ENCODE measurements at regions of chr1 and their contacts with region 1.

Region 1: DNA sequence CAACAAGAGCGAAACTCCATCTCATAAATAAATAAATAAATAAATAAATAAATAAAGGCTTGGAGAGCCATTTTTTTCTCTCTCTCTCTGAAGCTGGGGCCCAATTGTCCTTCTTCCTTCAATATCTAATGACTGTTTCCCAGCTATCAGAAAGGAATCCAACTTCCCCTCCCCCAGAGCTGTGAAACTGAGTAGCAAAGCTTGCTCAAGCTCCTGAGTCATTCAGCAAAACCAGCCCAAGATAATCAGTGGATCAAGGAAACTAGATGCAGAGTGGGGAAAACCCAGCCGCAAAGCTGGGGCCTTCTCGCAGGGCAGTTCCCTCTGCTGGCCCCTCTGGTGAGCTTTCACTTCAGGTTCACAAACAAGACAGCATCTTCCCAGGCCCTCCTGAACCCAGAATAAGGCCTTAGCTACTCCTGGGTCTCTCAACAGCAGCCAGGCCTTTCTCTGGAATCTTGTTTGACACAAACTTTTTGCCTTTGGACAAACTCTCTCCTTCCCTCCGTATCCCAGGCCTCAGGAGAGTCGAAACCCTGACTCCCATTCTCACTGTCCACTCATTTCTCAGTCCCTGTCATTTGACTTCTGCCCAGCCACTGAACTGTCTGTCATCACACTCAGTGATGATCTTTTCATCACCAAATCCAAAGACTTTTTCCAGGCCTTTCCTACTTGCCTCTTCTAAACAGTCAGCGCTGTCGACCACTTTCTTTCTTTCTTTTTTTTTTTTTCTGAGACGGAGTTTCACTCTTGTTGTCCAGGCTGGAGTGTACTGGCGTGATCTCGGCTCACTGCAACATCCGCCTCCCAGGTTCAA is 18.0 kb upstream of the PTP4A2 start:
- DNase-seq: peak; percentile 91
- ATAC-seq: peak; percentile 86
- H3K4me3 ChIP-seq: peak overlapping the region; percentile 25; the same call in 1 of the 2 replicates
- H3K27ac ChIP-seq: peak overlapping the region; percentile 98
- H3K4me1 ChIP-seq: peaks cover 75% of the 10 kb centered on the region
- H3K27me3 ChIP-seq: no peaks in the 10 kb centered on the region
- CTCF ChIP-seq: peak; percentile 26 to 42 (median 42); a peak in 4 of 6 replicates
- EP300 ChIP-seq: peak; percentile 84 to 88
- POLR2A ChIP-seq: peak; percentile 65
- RAD21 ChIP-seq: peak; percentile 48; the same call in 1 of the 2 replicates

Region 2: DNA sequence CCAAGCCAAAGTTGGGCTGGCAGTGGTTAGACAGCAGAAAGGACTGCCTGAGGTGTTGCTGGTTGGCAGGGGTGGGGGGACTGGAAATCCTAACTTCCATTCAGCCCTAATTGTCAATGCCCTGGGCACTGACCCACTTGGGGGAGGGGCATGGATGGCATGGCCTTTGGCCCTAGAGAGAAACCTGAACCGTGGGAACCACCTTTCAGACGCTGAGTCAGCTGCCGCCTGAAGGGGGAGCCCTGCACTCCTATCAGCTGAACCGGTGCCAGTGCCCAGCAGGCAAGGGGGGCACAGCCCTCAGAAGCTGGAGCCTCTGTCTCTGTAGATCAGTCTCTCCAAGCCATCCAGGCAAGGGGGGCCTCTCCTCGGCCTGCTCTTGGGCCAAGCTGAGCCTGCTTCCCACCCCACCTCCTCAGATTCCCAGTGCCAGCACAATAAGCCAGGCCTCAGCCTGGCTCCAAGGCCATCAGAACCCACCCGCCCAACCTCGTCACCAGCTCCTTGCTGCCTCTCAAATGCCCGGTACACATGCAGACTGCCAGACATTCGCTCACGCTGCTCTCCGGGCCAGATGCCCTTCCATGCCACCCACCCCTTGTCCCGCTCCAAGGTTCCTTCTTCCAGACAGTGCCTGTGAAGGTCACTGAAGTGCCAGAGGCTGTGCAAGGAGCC is 368.3 kb before region 1 on chr1:
- CTCF ChIA-PET with region 1: no interaction called
- POLR2A ChIA-PET with region 1: no interaction called
- RAD21 ChIA-PET with region 1: no interaction called
- SMC1A ChIA-PET with region 1: no interaction called
- in situ Hi-C with region 1: no loop called
- intact Hi-C with region 1: no loop called
- DNase-seq: no peak
- ATAC-seq: peak; percentile 95
- H3K4me3 ChIP-seq: no peak overlapping the region
- H3K27ac ChIP-seq: no peak overlapping the region
- H3K4me1 ChIP-seq: no peaks in the 10 kb centered on the region
- H3K27me3 ChIP-seq: no peaks in the 10 kb centered on the region; a peak in 1 of 4 replicates
- CTCF ChIP-seq: peak; percentile 69 to 82 (median 72)
- EP300 ChIP-seq: no peak
- POLR2A ChIP-seq: no peak
- RAD21 ChIP-seq: peak; percentile 55

Region 3: GRCh38 chr1:31815752-31816500 is 140.2 kb before region 1 on chr1 and contains the start of gene SPOCD1:
- CTCF ChIA-PET with region 1: interaction called, 85 read pairs
- POLR2A ChIA-PET with region 1: interaction called, 4 read pairs
- RAD21 ChIA-PET with region 1: interaction called, 3 read pairs
- SMC1A ChIA-PET with region 1: interaction called, 69 read pairs
- in situ Hi-C with region 1: loop called (anchors 5 kb)
- intact Hi-C with region 1: no loop called
- DNase-seq: peak; percentile 31
- ATAC-seq: peak; percentile 93
- H3K4me3 ChIP-seq: no peak within 1 kb of the TSS
- H3K27ac ChIP-seq: no peak within 1 kb of the TSS
- H3K4me1 ChIP-seq: no peaks in the 10 kb centered on the region
- H3K27me3 ChIP-seq: no peaks in the 10 kb centered on the region
- CTCF ChIP-seq: peak; percentile 62 to 79 (median 70)
- EP300 ChIP-seq: no peak
- POLR2A ChIP-seq: no peak
- RAD21 ChIP-seq: peak; percentile 81
- polyA plus RNA-seq, gene SPOCD1: 0.02 TPM in 1 of 2 experiments, not detected in the other

Region 4: DNA sequence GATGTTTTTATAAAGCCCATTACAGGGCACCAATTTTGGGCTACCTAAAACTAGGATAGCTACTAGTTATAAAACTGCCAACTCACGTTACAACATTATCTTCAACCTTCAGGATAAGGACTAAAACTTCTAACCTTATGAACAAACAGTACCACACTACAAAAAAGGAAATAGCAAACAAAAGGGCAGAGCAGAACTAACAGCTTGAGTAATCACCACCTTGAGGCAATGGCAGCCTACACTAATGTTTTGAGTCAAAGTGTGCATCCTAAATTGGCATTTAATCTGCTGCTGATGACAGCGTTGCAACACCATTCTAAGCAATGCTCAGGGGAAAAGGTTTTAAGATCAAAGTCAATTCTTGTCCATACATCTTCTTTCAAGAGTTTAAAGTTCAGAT is 45.2 kb before region 1 on chr1:
- CTCF ChIA-PET with region 1: interaction called, 7 read pairs
- POLR2A ChIA-PET with region 1: interaction called, 15 read pairs
- RAD21 ChIA-PET with region 1: interaction called, 25 read pairs
- SMC1A ChIA-PET with region 1: interaction called, 26 read pairs
- in situ Hi-C with region 1: no loop called
- intact Hi-C with region 1: loop called (anchors 10 kb)
- DNase-seq: peak; percentile 64
- ATAC-seq: peak; percentile 72
- H3K4me3 ChIP-seq: no peak overlapping the region
- H3K27ac ChIP-seq: no peak overlapping the region
- H3K4me1 ChIP-seq: peaks cover 29% of the 10 kb centered on the region
- H3K27me3 ChIP-seq: no peaks in the 10 kb centered on the region
- CTCF ChIP-seq: no peak
- EP300 ChIP-seq: peak in 1 of 2 experiments; percentile 73; a peak in 2 of 4 replicates
- POLR2A ChIP-seq: no peak
- RAD21 ChIP-seq: no peak

Region 5: GRCh38 chr1:31931593-31932225 is 24.4 kb before region 1 on chr1:
- CTCF ChIA-PET with region 1: interaction called, 565 read pairs
- POLR2A ChIA-PET with region 1: interaction called, 104 read pairs
- RAD21 ChIA-PET with region 1: interaction called, 79 read pairs
- SMC1A ChIA-PET with region 1: interaction called, 98 read pairs
- in situ Hi-C with region 1: no loop called
- intact Hi-C with region 1: no loop called
- DNase-seq: no peak
- ATAC-seq: peak; percentile 4; the same call in 1 of the 3 replicates
- H3K4me3 ChIP-seq: peak overlapping the region; percentile 84
- H3K27ac ChIP-seq: peak overlapping the region; percentile 93
- H3K4me1 ChIP-seq: peaks cover 25% of the 10 kb centered on the region
- H3K27me3 ChIP-seq: no peaks in the 10 kb centered on the region
- CTCF ChIP-seq: no peak
- EP300 ChIP-seq: no peak
- POLR2A ChIP-seq: no peak
- RAD21 ChIP-seq: no peak

Region 6: DNA sequence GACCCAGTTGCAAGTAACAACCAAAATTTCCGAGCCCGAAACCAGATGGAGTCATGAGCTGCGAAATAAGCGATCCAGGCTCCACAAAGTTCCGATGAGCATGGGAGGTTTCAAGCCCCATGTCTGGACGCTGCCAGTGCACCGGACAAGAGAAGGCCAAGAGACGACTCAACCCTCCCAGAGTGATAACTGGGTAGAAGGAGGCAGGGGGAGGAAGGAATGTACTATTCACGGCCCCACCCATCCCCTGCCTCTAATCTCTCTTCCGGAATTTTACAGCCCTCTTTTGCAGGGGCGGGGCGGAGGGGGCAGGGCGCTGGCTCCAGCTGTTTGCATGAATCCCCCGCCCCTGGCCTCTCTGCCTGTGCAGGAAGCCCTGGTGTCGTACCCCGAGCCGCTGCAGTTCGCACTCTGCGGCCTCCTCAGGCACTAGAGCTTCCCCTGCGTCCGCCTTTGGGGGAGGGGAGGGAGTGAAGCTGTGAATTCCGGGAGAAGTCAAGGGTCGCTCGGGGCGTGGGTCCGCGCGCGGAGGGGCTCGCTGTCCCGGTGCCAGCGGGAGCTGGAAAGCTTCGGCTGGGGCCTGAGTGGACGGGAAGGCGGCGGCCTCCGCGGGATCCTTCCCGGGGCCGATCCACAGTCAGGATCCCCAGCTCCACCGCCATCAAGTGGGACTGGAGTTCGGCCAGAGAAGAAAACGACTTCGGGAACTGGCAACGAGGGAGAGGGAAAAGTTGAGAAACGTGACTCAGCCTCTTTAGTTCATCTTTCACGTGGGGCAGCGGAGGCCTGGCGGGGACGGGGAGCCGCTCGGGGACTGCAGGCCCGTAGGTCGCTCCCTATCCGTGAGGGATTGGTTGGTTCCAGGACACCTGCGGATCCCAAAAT is 11.7 kb before region 1 on chr1:
- CTCF ChIA-PET with region 1: interaction called, 565 read pairs
- POLR2A ChIA-PET with region 1: interaction called, 153 read pairs
- RAD21 ChIA-PET with region 1: interaction called, 163 read pairs
- SMC1A ChIA-PET with region 1: interaction called, 315 read pairs
- in situ Hi-C with region 1: no loop called
- intact Hi-C with region 1: loop called (anchors 1 kb)
- DNase-seq: peak; percentile 75
- ATAC-seq: peak; percentile 85
- H3K4me3 ChIP-seq: peak overlapping the region; percentile 78
- H3K27ac ChIP-seq: peak overlapping the region; percentile 94
- H3K4me1 ChIP-seq: peaks cover 38% of the 10 kb centered on the region
- H3K27me3 ChIP-seq: no peaks in the 10 kb centered on the region
- CTCF ChIP-seq: no peak
- EP300 ChIP-seq: 0 out of 4 replicates have a peak, but pooled peaks of 1 of the 2 experiments have one; percentile 25
- POLR2A ChIP-seq: peak; percentile 99
- RAD21 ChIP-seq: no peak; the same call in 1 of the 2 replicates

Region 7: DNA sequence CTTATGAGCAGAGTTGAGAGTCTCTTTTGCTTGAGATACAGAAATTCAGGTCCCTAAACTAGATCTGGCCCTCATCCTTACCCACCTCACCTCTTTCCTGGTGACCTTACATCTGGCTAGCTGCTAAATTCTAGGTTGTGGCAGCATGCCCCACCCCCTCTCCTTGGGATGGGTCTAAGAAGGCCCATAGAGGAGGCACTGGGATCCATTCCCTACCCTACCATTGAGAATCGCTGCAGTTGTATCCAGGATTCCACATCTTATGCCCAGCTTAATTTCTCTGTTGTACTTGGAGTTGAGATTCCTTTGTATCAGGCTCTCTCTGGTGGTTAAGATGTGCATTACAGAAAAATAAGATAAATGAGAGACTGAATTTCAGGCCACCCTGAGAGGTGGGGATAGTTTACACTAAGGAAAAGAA is 107.1 kb after region 1 on chr1:
- CTCF ChIA-PET with region 1: no interaction called
- POLR2A ChIA-PET with region 1: no interaction called
- RAD21 ChIA-PET with region 1: interaction called, 4 read pairs
- SMC1A ChIA-PET with region 1: interaction called, 8 read pairs
- in situ Hi-C with region 1: no loop called
- intact Hi-C with region 1: loop called (anchors 5 kb)
- DNase-seq: no peak
- ATAC-seq: peak; percentile 80
- H3K4me3 ChIP-seq: no peak overlapping the region
- H3K27ac ChIP-seq: no peak overlapping the region
- H3K4me1 ChIP-seq: peaks cover 4% of the 10 kb centered on the region
- H3K27me3 ChIP-seq: no peaks in the 10 kb centered on the region
- CTCF ChIP-seq: peak; percentile 50 to 71 (median 63); a peak in 5 of 6 replicates
- EP300 ChIP-seq: no peak
- POLR2A ChIP-seq: no peak
- RAD21 ChIP-seq: peak; percentile 76